HCT116 (cell line): ENCODE measurements at regions of chr2 and their contacts with region 1.

Region 1: GRCh38 chr2:227147023-227147422 is 17.0 kb downstream of the COL4A4 start:
- DNase-seq: no peak
- ATAC-seq: no peak
- H3K4me3 ChIP-seq: no peak overlapping the region
- H3K27ac ChIP-seq: no peak overlapping the region
- H3K4me1 ChIP-seq: no peaks in the 10 kb centered on the region
- H3K27me3 ChIP-seq: no peaks in the 10 kb centered on the region
- CTCF ChIP-seq: no peak
- POLR2A ChIP-seq: no peak
- RAD21 ChIP-seq: no peak

Region 2: GRCh38 chr2:227759411-227760113 is 612.5 kb after region 1 on chr2:
- CTCF ChIA-PET with region 1: no interaction called
- POLR2A ChIA-PET with region 1: no interaction called
- RAD21 ChIA-PET with region 1: no interaction called
- intact Hi-C with region 1: loop called (anchors 5 kb)
- DNase-seq: no peak
- ATAC-seq: no peak
- H3K4me3 ChIP-seq: no peak overlapping the region
- H3K27ac ChIP-seq: no peak overlapping the region
- H3K4me1 ChIP-seq: no peaks in the 10 kb centered on the region
- H3K27me3 ChIP-seq: no peaks in the 10 kb centered on the region
- CTCF ChIP-seq: no peak
- POLR2A ChIP-seq: no peak
- RAD21 ChIP-seq: no peak